ENCODE measurements at regions of chr17 and their contacts with region 1.

Region 1: DNA sequence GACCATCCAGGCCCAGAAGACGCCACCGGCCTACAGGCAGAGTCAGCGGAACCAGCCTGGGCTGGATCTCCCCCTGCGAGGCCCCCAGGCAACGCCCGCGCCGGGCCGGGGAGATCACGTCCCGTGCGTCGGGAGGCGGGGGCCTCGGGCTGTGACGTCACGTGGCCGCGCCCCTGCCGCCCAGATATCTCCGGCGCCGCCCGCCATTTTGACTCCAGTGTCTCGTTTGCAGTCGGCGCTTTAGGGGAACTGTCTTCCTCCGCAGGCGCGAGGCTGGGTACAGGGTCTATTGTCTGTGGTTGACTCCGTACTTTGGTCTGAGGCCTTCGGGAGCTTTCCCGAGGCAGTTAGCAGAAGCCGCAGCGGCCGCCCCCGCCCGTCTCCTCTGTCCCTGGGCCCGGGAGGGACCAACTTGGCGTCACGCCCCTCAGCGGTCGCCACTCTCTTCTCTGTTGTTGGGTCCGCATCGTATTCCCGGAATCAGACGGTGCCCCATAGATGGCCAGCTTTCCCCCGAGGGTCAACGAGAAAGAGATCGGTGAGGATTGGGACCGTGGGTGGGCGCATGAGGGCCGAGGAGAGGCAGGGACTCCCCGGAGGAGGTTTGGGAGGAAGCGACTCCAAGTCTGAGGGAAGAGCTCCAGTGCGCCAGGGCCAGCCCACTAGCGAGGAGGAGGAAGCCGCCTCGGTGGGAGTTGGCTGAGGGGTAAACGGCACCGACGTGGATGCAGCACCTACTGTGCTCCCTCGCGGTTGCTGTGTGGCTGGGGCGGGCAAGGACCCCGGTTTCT is at the start of gene WSB1:
- DNase-seq: peak; percentile 95
- H3K4me3 ChIP-seq: peak within 1 kb of the TSS; percentile 99
- H3K27ac ChIP-seq: peak within 1 kb of the TSS; percentile 82
- H3K4me1 ChIP-seq: peaks cover 25% of the 10 kb centered on the region
- CTCF ChIP-seq: peak; percentile 39; the same call in 1 of the 2 replicates
- total RNA-seq, gene WSB1: 86.0 and 118 TPM in 2 replicates

Region 2: DNA sequence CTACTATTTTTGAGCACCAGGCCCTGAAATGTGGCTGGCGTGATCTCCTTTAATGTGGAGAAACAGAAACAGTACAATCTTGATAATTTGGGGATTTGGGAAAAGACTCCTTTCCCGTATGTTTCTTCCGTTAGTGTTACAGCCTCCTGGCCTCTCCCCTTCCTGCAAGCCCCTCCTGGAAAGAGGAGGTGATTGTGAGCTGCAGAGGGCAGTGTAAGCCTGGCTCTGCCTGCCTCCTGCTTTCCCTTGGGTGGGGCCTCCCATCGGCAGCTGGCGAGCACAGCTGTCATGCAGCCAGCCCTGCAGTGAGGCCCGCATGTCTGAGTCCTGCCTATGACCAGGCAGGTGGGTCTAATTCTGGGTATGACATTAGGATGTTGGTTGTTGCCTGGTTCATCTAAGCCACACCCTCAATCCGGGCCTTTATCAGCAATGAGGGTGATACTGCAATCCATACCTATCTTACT is 48.8 kb before region 1 on chr17:
- CTCF ChIA-PET with region 1: no interaction called
- POLR2A ChIA-PET with region 1: no interaction called
- intact Hi-C with region 1: loop called (anchors 2 kb)
- DNase-seq: peak; percentile 77
- H3K4me3 ChIP-seq: no peak overlapping the region
- H3K27ac ChIP-seq: no peak overlapping the region
- H3K4me1 ChIP-seq: peaks cover 14% of the 10 kb centered on the region
- CTCF ChIP-seq: peak; percentile 79

Region 3: DNA sequence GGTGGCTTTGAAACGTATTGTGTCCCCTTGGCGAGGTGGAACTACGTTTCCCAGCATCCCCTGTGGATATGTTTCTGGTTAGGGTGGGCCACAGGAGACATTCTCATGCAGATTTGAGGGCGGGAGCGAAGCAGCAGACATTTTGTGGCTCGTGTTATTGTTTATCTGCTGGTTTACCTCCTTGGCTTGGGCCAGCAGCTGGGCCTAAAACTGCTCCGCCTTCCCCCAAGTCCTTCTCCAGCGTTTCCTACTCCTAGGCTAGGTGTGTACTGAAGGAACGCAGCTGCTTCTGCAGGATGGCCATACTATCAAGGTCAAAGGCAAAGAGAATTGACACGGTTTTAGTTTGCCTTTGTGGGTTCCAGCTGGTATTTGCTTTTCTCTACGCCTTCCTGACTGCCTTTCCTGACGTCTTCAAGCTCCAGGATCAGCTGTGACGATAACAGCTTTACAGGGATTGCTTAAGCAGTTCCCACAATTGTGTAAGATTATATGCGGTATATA is 17.4 kb before region 1 on chr17:
- CTCF ChIA-PET with region 1: interaction called, 11 read pairs
- POLR2A ChIA-PET with region 1: interaction called, 11 read pairs
- intact Hi-C with region 1: no loop called
- DNase-seq: no peak
- H3K4me3 ChIP-seq: no peak overlapping the region
- H3K27ac ChIP-seq: no peak overlapping the region
- H3K4me1 ChIP-seq: peaks cover 2% of the 10 kb centered on the region
- CTCF ChIP-seq: no peak

Region 4: DNA sequence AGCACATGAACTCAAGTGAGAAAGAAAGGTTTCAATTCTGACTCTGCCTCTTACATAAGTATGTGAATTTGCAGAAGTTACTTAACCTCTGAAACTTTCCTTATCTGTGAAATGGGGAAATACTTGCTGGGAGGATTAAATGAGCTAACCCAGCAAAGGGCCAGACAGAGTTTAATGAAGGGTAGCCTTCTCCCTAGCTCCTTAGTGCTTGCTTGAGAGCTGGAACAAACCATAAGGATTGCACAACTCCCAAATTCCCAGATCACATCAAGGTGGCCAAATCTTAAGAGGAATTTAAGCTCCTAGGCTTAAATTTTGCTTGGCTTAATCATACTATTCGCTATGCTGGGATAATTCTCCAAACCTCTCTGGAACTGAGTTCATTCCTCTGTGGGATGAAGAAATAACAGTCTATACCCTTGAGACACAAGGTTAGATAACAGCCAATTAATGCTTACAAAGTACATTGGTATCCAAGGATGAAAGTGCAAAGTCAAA is 12.0 kb before region 1 on chr17:
- CTCF ChIA-PET with region 1: interaction called, 11 read pairs
- POLR2A ChIA-PET with region 1: interaction called, 11 read pairs
- intact Hi-C with region 1: no loop called
- DNase-seq: peak; percentile 21
- H3K4me3 ChIP-seq: no peak overlapping the region
- H3K27ac ChIP-seq: no peak overlapping the region
- H3K4me1 ChIP-seq: peaks cover 16% of the 10 kb centered on the region
- CTCF ChIP-seq: no peak

Region 5: GRCh38 chr17:27353461-27354050 is 59.5 kb after region 1 on chr17:
- CTCF ChIA-PET with region 1: no interaction called
- POLR2A ChIA-PET with region 1: no interaction called
- intact Hi-C with region 1: loop called (anchors 2 kb)
- DNase-seq: peak; percentile 85
- H3K4me3 ChIP-seq: peak overlapping the region; percentile 84
- H3K27ac ChIP-seq: peak overlapping the region; percentile 8
- H3K4me1 ChIP-seq: peaks cover 17% of the 10 kb centered on the region
- CTCF ChIP-seq: peak; percentile 88

Region 6: GRCh38 chr17:27455914-27456680 is 162.0 kb after region 1 on chr17 and contains the start of gene KSR1:
- CTCF ChIA-PET with region 1: no interaction called
- POLR2A ChIA-PET with region 1: no interaction called
- intact Hi-C with region 1: loop called (anchors 5 kb)
- DNase-seq: peak; percentile 82
- H3K4me3 ChIP-seq: peak within 1 kb of the TSS; percentile 82
- H3K27ac ChIP-seq: no peak within 1 kb of the TSS
- H3K4me1 ChIP-seq: peaks cover 6% of the 10 kb centered on the region
- CTCF ChIP-seq: peak; percentile 77
- total RNA-seq, gene KSR1: 2.0 and 2.2 TPM in 2 replicates